Head of caudate nucleus (tissue), 42 donors: ENCODE measurements at regions of chr15 and their contacts with region 1.

Region 1: GRCh38 chr15:77118882-77119321 is 48.0 kb upstream of the TSPAN3 start:
- DNase-seq: peak in 29 of 42 donors; percentile 18 to 82 (median 57)

Region 2: DNA sequence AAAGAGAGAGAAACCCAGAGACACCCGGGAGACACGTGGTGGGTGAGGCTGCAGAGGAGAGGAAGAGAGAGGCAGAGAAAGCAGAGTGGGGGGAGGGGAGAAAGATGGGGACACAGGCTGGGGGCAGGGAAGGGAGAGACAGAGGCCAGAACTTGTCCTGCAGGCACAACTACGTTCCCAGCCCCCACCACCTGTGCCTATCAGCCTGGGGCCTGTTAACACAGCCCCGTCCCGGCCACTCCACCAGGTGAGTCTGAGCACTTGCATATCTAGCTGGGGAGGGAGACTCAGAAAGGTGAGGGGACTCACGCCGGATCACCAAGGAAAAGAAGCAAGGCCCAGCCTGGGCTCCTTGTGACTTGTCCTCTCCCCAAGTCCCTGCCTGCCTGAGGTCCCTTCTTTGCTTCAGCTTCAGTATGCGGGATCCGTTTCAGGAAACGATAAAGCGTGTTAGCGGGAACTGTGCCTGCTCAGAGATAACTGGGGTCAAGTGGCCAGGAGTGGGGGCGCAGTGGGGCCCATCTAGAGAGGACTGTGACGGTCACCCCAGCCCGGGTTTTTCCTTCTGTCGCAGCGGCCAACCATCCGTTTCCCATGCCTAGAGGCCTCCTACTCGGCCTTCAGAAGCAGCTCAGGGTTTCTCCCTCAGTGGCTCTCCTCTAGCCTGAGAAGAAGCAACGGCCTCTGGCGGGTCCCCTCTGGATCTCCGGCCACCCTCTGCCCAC is 503.5 kb after region 1 on chr15:
- intact Hi-C with region 1: loop called (anchors 10 kb)
- DNase-seq: peak in 1 of 42 donors; percentile 27